Activated naive CD8-positive, alpha-beta T cell treated with anti-CD3 and anti-CD28 coated beads, Interleukin-2, amount 10 ng/mL, durations not matched to agents 7 days and 5 days (primary cell): ENCODE measurements at regions of chr7 and their contacts with region 1.

Region 1: GRCh38 chr7:44797329-44798251 is 1.1 kb downstream of the PPIA start:
- DNase-seq: peak; percentile 83
- ATAC-seq: peak; percentile 49
- H3K4me3 Mint-ChIP-seq: peak overlapping the region; percentile 98
- H3K27ac Mint-ChIP-seq: peak overlapping the region; percentile 96
- H3K4me1 Mint-ChIP-seq: peaks cover 27% of the 10 kb centered on the region
- H3K27me3 Mint-ChIP-seq: no peaks in the 10 kb centered on the region

Region 2: GRCh38 chr7:44638611-44639557 is 158.7 kb before region 1 on chr7:
- POLR2A ChIA-PET with region 1: interaction called, 11 read pairs
- DNase-seq: peak; percentile 78
- ATAC-seq: peak; percentile 86
- H3K4me3 Mint-ChIP-seq: peak overlapping the region; percentile 86
- H3K27ac Mint-ChIP-seq: peak overlapping the region; percentile 99
- H3K4me1 Mint-ChIP-seq: peaks cover 58% of the 10 kb centered on the region
- H3K27me3 Mint-ChIP-seq: no peaks in the 10 kb centered on the region

Region 3: DNA sequence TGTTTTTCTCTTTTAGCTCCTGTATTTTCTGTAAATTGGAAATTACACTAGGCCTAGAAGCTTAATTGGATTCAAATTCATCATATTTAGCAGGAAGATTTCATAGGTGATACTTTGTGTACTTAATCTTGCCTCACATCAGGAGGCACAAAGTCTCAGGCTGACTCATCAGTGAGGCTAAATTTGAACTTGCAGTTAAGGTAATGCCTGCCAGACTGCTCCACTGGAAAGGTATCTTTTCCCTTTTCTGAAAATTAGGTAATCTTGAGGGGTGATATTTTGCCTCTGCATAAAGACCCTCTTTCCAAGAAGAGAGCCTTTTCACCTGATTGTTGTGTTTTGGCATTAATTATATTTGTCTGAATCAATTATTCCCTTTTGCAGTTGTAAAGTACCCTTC is 13.5 kb after region 1 on chr7:
- POLR2A ChIA-PET with region 1: interaction called, 11 read pairs
- DNase-seq: no peak
- ATAC-seq: no peak
- H3K4me3 Mint-ChIP-seq: no peak overlapping the region
- H3K27ac Mint-ChIP-seq: no peak overlapping the region
- H3K4me1 Mint-ChIP-seq: no peaks in the 10 kb centered on the region
- H3K27me3 Mint-ChIP-seq: no peaks in the 10 kb centered on the region